ENCODE measurements at regions of chr2 and their contacts with region 1.

Region 1: GRCh38 chr2:126776692-126777619 is 121.0 kb downstream of the GYPC start:
- DNase-seq: peak; percentile 62 to 85 (median 80)
- ATAC-seq: peak; percentile 91
- H3K4me3 ChIP-seq: peak overlapping the region; percentile 86
- H3K4me3 Mint-ChIP-seq: peak overlapping the region; percentile 90 to 98 (median 94)
- H3K27ac ChIP-seq: peak overlapping the region; percentile 64
- H3K27ac Mint-ChIP-seq: peak overlapping the region; percentile 46 to 95 (median 87)
- H3K4me1 ChIP-seq: no peaks in the 10 kb centered on the region
- H3K4me1 Mint-ChIP-seq: peaks cover 15 to 27% (median 18%) of the 10 kb centered on the region in 7 donors
- H3K27me3 ChIP-seq: no peaks in the 10 kb centered on the region
- H3K27me3 Mint-ChIP-seq: peaks cover under 1 to 23% (median 3%) of the 10 kb centered on the region in 5 donors

Region 2: DNA sequence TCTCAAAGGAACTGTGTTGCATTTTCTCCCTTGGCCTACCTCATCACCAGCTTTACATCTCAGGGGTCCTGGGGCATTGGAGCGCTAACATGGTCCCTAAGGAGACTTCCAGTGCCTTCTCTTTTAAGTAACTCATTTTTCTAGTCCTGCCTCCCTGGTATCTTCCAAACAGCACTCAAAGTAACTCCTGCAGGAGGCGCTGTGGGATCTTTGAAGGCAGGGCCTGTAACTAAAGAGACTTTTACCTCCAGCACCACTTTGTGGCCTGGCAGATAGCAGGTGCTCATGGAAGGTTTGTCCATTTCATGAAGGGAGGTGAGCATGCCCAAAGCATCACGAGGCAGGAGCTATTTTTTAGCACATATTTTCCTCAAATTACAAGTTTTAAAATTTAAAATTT is 532.0 kb before region 1 on chr2:
- CTCF ChIA-PET with region 1: no interaction called
- POLR2A ChIA-PET with region 1: no interaction called
- intact Hi-C with region 1: loop called in 1 of 2 experiments (anchors 1 kb)
- DNase-seq: peak in 3 of 9 donors; percentile 4 to 9 (median 7)
- ATAC-seq: no peak
- H3K4me3 ChIP-seq: no peak overlapping the region
- H3K4me3 Mint-ChIP-seq: no peak overlapping the region
- H3K27ac ChIP-seq: no peak overlapping the region
- H3K27ac Mint-ChIP-seq: no peak overlapping the region
- H3K4me1 ChIP-seq: no peaks in the 10 kb centered on the region
- H3K4me1 Mint-ChIP-seq: no peaks in the 10 kb centered on the region
- H3K27me3 ChIP-seq: no peaks in the 10 kb centered on the region
- H3K27me3 Mint-ChIP-seq: peaks cover 0 to 33% (median 21%) of the 10 kb centered on the region in 5 donors

Region 3: GRCh38 chr2:126399001-126399400 is 378.0 kb before region 1 on chr2:
- CTCF ChIA-PET with region 1: no interaction called
- POLR2A ChIA-PET with region 1: no interaction called
- intact Hi-C with region 1: loop called in 1 of 2 experiments (anchors 1 kb)
- DNase-seq: peak in 3 of 9 donors; percentile 4 to 24 (median 13)
- ATAC-seq: no peak
- H3K4me3 ChIP-seq: no peak overlapping the region
- H3K4me3 Mint-ChIP-seq: no peak overlapping the region
- H3K27ac ChIP-seq: no peak overlapping the region
- H3K27ac Mint-ChIP-seq: no peak overlapping the region
- H3K4me1 ChIP-seq: no peaks in the 10 kb centered on the region
- H3K4me1 Mint-ChIP-seq: peaks cover 0 to 1% (median 0%) of the 10 kb centered on the region in 7 donors
- H3K27me3 ChIP-seq: no peaks in the 10 kb centered on the region
- H3K27me3 Mint-ChIP-seq: peaks cover 4 to 21% (median 14%) of the 10 kb centered on the region in 5 donors

Region 4: DNA sequence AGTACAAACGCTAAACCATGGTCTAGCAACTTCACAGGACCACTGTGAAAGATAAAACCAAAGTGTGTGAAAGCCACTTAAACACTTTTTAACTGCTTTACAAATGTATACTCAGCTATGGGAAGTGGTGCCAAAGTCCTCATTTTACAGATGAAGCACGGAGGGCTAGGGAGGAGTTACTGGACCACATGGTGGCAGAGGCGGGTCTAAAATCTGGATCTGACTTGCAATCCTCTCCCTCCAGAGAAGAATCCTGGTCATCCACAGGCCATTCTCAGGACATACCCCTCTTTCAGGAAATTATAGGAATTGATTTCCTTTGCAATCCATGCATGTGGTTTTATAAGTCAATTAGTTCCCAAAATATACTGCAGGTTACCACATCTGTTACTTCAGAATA is 205.6 kb before region 1 on chr2:
- CTCF ChIA-PET with region 1: no interaction called
- POLR2A ChIA-PET with region 1: no interaction called
- intact Hi-C with region 1: loop called in 1 of 2 experiments (anchors 1 kb)
- DNase-seq: no peak
- ATAC-seq: no peak
- H3K4me3 ChIP-seq: no peak overlapping the region
- H3K4me3 Mint-ChIP-seq: no peak overlapping the region
- H3K27ac ChIP-seq: no peak overlapping the region
- H3K27ac Mint-ChIP-seq: no peak overlapping the region
- H3K4me1 ChIP-seq: no peaks in the 10 kb centered on the region
- H3K4me1 Mint-ChIP-seq: no peaks in the 10 kb centered on the region
- H3K27me3 ChIP-seq: no peaks in the 10 kb centered on the region
- H3K27me3 Mint-ChIP-seq: no peaks in the 10 kb centered on the region

Region 5: DNA sequence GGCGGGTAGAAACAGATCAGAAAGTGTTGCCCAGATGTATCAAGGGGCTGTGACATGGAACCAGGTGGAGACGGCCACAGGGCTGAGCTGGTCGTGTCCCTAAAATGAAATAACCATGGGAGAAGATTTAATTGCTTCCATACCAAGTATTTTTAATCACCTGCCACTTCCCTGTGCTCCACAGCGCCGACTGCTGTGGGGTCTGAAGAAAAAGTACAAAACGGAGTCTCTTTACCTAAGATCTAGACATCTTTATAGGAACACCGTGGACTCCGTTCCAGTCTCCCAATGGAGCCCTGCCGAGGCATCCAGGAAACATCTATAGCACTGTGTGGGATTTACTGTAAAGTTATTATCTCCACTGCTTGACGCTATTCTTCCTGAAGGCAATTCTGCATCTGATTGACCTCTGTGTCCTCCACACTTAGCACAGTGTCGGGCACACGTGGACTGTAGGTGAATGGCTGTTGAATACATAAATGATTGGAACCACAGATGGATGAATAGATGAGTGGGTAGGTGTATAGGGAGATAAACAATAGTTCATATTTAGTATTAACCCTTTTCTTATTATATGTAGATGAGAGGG is 142.6 kb before region 1 on chr2:
- CTCF ChIA-PET with region 1: no interaction called
- POLR2A ChIA-PET with region 1: no interaction called
- intact Hi-C with region 1: loop called (anchors 1 kb)
- DNase-seq: peak in 7 of 9 donors; percentile 12 to 35 (median 21)
- ATAC-seq: peak; percentile 50
- H3K4me3 ChIP-seq: no peak overlapping the region
- H3K4me3 Mint-ChIP-seq: no peak overlapping the region
- H3K27ac ChIP-seq: no peak overlapping the region
- H3K27ac Mint-ChIP-seq: peak overlapping the region in 1 of 9 donors; percentile 33
- H3K4me1 ChIP-seq: no peaks in the 10 kb centered on the region
- H3K4me1 Mint-ChIP-seq: peaks cover 0 to 10% (median 4%) of the 10 kb centered on the region in 7 donors
- H3K27me3 ChIP-seq: peaks cover 0 to 3% of the 10 kb centered on the region in 2 donors
- H3K27me3 Mint-ChIP-seq: peaks cover 0 to 51% (median 0%) of the 10 kb centered on the region in 5 donors

Region 6: GRCh38 chr2:126699716-126700581 is 77.0 kb before region 1 on chr2:
- CTCF ChIA-PET with region 1: interaction called, 6 read pairs
- POLR2A ChIA-PET with region 1: no interaction called
- intact Hi-C with region 1: loop called in 1 of 2 experiments (anchors 5 kb)
- DNase-seq: no peak
- ATAC-seq: no peak
- H3K4me3 ChIP-seq: no peak overlapping the region
- H3K4me3 Mint-ChIP-seq: no peak overlapping the region
- H3K27ac ChIP-seq: no peak overlapping the region
- H3K27ac Mint-ChIP-seq: peak overlapping the region in 6 of 9 donors; percentile 6 to 63 (median 42)
- H3K4me1 ChIP-seq: no peaks in the 10 kb centered on the region
- H3K4me1 Mint-ChIP-seq: peaks cover 0 to 17% (median 8%) of the 10 kb centered on the region in 7 donors
- H3K27me3 ChIP-seq: no peaks in the 10 kb centered on the region
- H3K27me3 Mint-ChIP-seq: no peaks in the 10 kb centered on the region

Region 7: GRCh38 chr2:126761981-126762878 is 14.7 kb before region 1 on chr2:
- CTCF ChIA-PET with region 1: interaction called, 7 read pairs
- POLR2A ChIA-PET with region 1: interaction called, 12 read pairs
- intact Hi-C with region 1: loop called (anchors 1 kb)
- DNase-seq: peak in 7 of 9 donors; percentile 41 to 71 (median 59)
- ATAC-seq: peak; percentile 92
- H3K4me3 ChIP-seq: peak overlapping the region; percentile 42
- H3K4me3 Mint-ChIP-seq: peak overlapping the region; percentile 41 to 84 (median 71)
- H3K27ac ChIP-seq: peak overlapping the region; percentile 62
- H3K27ac Mint-ChIP-seq: peak overlapping the region; percentile 64 to 95 (median 89)
- H3K4me1 ChIP-seq: peaks cover 29 to 41% of the 10 kb centered on the region in 2 donors
- H3K4me1 Mint-ChIP-seq: peaks cover 39 to 87% (median 70%) of the 10 kb centered on the region in 7 donors
- H3K27me3 ChIP-seq: no peaks in the 10 kb centered on the region
- H3K27me3 Mint-ChIP-seq: peaks cover 0 to 30% (median 0%) of the 10 kb centered on the region in 5 donors

Region 8: GRCh38 chr2:126831234-126832005 is 54.5 kb after region 1 on chr2:
- CTCF ChIA-PET with region 1: no interaction called
- POLR2A ChIA-PET with region 1: no interaction called
- intact Hi-C with region 1: no loop called
- DNase-seq: no peak
- ATAC-seq: peak; percentile 69
- H3K4me3 ChIP-seq: no peak overlapping the region
- H3K4me3 Mint-ChIP-seq: no peak overlapping the region
- H3K27ac ChIP-seq: no peak overlapping the region
- H3K27ac Mint-ChIP-seq: no peak overlapping the region
- H3K4me1 ChIP-seq: no peaks in the 10 kb centered on the region
- H3K4me1 Mint-ChIP-seq: peaks cover 0 to 6% (median 0%) of the 10 kb centered on the region in 7 donors
- H3K27me3 ChIP-seq: no peaks in the 10 kb centered on the region
- H3K27me3 Mint-ChIP-seq: peaks cover 0 to 4% (median 0%) of the 10 kb centered on the region in 5 donors